Activated CD4-positive, alpha-beta T cell treated with anti-CD3 and anti-CD28 coated beads, Interleukin-2, amount 10 ng/mL, durations not matched to agents 24 days and 14 days (primary cell): ENCODE measurements at regions of chr6 and their contacts with region 1.

Region 1: GRCh38 chr6:112043032-112044007 is 10.6 kb upstream of the CCN6 start:
- DNase-seq: peak; percentile 97
- H3K4me3 Mint-ChIP-seq: peak overlapping the region; percentile 93
- H3K27ac Mint-ChIP-seq: peak overlapping the region; percentile 96
- H3K4me1 Mint-ChIP-seq: peaks cover 24% of the 10 kb centered on the region
- H3K27me3 Mint-ChIP-seq: no peaks in the 10 kb centered on the region

Region 2: DNA sequence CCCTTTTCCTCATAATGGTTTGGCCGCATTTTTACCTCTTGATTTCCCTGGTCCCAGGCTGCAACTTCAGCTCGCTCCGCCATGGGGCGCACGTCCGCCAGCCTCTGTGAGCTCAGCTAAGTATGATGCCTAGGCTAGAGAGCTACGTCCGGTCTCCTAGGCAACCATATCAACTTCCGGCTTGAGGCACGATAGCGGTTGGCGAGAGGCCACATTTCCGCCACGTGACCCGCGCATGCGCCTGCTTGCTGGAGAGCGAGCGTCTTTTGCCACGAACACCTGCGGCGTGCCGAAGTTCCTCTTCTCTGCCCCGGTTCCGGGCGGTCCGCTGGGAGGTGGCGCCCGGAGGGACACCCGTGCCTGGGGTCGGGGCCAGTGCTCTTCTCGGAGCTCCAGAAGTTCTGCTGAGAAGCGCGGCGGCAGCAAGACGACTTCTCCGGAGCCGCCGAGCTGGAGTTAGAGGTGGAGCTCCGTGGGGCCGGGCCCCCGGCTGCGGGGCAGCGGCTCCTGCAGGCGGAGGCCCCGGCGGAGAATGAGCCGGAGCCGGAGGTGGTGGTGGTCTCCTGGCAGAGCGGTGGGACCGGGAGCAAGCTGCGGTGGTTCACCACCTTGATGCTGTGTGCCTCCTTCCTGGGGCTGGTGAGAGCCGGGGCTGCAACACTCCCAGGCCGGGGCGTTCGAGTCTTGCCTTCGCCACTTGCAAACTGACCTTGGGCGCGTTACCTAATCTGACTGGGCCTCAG is 784.1 kb before region 1 on chr6:
- intact Hi-C with region 1: loop called (anchors 1 kb)
- DNase-seq: peak; percentile 100
- H3K4me3 Mint-ChIP-seq: peak overlapping the region; percentile 84
- H3K27ac Mint-ChIP-seq: peak overlapping the region; percentile 91
- H3K4me1 Mint-ChIP-seq: peaks cover 26% of the 10 kb centered on the region
- H3K27me3 Mint-ChIP-seq: peaks cover 11% of the 10 kb centered on the region

Region 3: GRCh38 chr6:111804627-111805235 is 238.6 kb before region 1 on chr6:
- intact Hi-C with region 1: loop called (anchors 1 kb)
- DNase-seq: peak; percentile 90
- H3K4me3 Mint-ChIP-seq: peak overlapping the region; percentile 82
- H3K27ac Mint-ChIP-seq: peak overlapping the region; percentile 99
- H3K4me1 Mint-ChIP-seq: peaks cover 82% of the 10 kb centered on the region
- H3K27me3 Mint-ChIP-seq: no peaks in the 10 kb centered on the region

Region 4: GRCh38 chr6:111973118-111973761 is 70.1 kb before region 1 on chr6:
- intact Hi-C with region 1: loop called (anchors 1 kb)
- DNase-seq: peak; percentile 86
- H3K4me3 Mint-ChIP-seq: peak overlapping the region; percentile 73
- H3K27ac Mint-ChIP-seq: peak overlapping the region; percentile 86
- H3K4me1 Mint-ChIP-seq: peaks cover 51% of the 10 kb centered on the region
- H3K27me3 Mint-ChIP-seq: peaks cover 7% of the 10 kb centered on the region

Region 5: GRCh38 chr6:112010328-112010727 is 33.0 kb before region 1 on chr6:
- intact Hi-C with region 1: loop called (anchors 1 kb)
- DNase-seq: peak; percentile 75
- H3K4me3 Mint-ChIP-seq: no peak overlapping the region
- H3K27ac Mint-ChIP-seq: peak overlapping the region; percentile 11
- H3K4me1 Mint-ChIP-seq: peaks cover 33% of the 10 kb centered on the region
- H3K27me3 Mint-ChIP-seq: no peaks in the 10 kb centered on the region

Region 6: DNA sequence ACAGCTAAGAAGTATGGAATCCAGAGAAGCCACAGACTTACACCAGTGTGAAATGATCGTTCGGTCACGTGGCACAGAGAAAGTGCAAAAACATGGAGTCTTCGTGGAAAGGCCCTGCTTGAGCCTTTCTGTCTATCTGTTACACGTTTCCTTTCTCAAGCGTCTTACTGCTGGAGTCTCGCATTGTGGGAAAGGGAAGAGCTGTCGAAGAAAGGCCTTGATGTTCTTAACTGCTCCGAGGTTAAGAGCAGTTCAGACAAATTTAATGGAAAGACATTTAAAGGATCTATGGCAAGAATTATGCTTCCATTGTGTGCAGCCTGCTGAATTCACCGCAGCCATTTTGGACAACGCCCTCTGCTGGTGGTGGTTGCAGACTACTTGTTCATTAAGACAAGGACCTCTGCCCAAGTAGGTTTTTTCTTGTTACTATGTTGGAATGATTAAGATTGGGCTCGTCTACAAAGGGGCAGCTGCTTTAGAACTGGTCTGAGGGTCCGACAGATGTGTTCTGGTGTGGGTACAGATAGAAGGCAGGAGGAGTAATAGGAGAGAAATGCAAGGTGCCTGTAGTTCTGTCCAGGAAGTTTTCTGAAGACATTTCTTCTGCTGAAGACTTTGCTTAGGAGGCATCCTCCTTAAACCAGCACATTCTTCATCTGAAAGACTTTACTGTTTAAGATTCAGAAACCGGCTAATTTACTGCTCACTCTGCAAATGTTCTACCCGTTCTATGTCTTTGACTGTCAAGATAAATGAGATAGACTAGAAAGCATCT is 14.1 kb before region 1 on chr6:
- intact Hi-C with region 1: loop called (anchors 1 kb)
- DNase-seq: peak; percentile 86
- H3K4me3 Mint-ChIP-seq: peak overlapping the region; percentile 0
- H3K27ac Mint-ChIP-seq: peak overlapping the region; percentile 93
- H3K4me1 Mint-ChIP-seq: peaks cover 56% of the 10 kb centered on the region
- H3K27me3 Mint-ChIP-seq: no peaks in the 10 kb centered on the region

Region 7: GRCh38 chr6:112076200-112076599 is 32.9 kb after region 1 on chr6:
- intact Hi-C with region 1: no loop called
- DNase-seq: no peak
- H3K4me3 Mint-ChIP-seq: no peak overlapping the region
- H3K27ac Mint-ChIP-seq: no peak overlapping the region
- H3K4me1 Mint-ChIP-seq: no peaks in the 10 kb centered on the region
- H3K27me3 Mint-ChIP-seq: no peaks in the 10 kb centered on the region

Region 8: GRCh38 chr6:112180095-112180820 is 136.9 kb after region 1 on chr6:
- intact Hi-C with region 1: no loop called
- DNase-seq: peak; percentile 86
- H3K4me3 Mint-ChIP-seq: no peak overlapping the region
- H3K27ac Mint-ChIP-seq: no peak overlapping the region
- H3K4me1 Mint-ChIP-seq: no peaks in the 10 kb centered on the region
- H3K27me3 Mint-ChIP-seq: peaks cover 41% of the 10 kb centered on the region